BJ (cell line): ENCODE measurements at regions of chr20 and their contacts with region 1.

Region 1: GRCh38 chr20:21571841-21572690 is 58.2 kb upstream of the NKX2-2 start:
- DNase-seq: no peak
- H3K4me3 ChIP-seq: no peak overlapping the region
- H3K27me3 ChIP-seq: no peaks in the 10 kb centered on the region
- CTCF ChIP-seq: peak; percentile 86

Region 2: GRCh38 chr20:20837574-20838021 is 734.5 kb before region 1 on chr20:
- CTCF ChIA-PET with region 1: interaction called, 13 read pairs
- POLR2A ChIA-PET with region 1: no interaction called
- DNase-seq: no peak
- H3K4me3 ChIP-seq: no peak overlapping the region
- H3K27me3 ChIP-seq: no peaks in the 10 kb centered on the region
- CTCF ChIP-seq: peak; percentile 72

Region 3: DNA sequence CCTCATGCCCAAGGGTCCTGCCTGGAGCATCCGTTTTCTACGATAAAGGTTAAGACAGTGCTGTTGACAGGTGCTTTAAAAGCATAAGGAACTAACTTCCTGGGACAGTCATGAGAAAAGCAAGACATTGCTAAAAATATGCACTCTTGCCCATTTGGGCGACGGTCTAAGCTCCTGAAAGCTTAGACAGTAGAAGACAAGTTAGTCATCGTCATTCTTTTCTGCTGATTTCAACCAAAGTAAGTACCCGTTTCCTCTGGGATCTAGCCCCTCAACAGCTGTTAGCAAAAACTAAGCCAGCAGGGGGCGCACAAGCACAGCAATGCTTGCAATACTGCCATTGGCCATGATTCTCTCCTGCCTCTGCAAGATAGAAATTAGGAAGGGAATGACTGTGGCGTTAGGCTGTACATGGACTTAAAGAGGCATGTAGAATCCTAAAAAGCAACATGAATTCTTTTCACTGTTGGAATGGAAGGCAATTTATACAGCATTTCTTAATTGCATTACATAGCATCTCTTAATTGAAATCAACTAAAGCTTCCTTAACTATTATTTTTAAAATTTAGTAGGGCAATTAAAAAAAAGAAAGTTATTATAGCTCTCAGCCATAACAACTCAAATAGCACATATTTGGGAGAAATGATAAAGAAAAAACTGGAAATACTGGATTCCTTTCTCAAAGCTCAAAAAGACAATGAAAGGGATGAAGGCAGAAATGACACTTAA is 711.8 kb before region 1 on chr20:
- CTCF ChIA-PET with region 1: interaction called, 15 read pairs
- POLR2A ChIA-PET with region 1: no interaction called
- DNase-seq: peak; percentile 31
- H3K4me3 ChIP-seq: no peak overlapping the region
- H3K27me3 ChIP-seq: no peaks in the 10 kb centered on the region
- CTCF ChIP-seq: peak; percentile 79

Region 4: DNA sequence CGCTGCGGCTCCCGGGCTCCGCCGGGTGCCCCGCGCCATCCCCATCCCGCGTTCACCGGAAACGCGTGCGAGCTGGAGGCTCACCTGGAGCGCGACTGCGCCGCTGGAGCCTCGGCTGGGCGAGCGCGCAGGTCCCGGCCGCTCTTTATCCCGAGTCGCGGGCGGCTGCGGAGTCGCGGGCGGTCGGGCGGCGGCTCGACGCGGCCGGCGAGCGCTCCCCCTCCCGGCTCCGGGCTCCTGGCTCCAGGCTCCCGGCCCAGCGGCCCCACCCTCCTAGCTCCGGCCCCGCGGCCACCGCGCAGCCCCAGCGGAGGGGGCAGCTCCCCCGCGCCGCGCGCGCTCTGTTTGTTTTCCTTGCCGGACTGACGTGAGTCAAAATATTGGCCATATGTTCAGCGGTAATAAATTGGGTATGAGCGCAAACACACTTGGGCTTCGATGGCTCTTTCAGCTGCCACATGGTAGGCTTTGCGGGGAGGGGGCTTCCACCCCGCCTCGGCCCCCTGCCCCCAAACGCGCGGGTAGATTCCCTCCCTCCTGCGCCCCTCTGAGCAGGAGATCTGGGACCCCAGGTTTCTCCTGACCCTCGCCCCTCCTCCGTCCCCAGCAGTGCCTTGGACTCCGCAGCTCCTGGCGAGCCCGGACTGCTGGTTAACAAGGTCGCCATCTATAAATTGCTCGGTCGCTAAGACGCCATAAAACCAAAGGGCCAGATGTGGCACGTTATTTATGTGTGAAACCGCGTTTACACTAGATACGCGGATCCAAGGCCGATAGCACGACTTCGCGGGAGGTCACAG is 49.4 kb before region 1 on chr20:
- CTCF ChIA-PET with region 1: no interaction called
- POLR2A ChIA-PET with region 1: no interaction called
- DNase-seq: no peak
- H3K4me3 ChIP-seq: no peak overlapping the region
- H3K27me3 ChIP-seq: peaks cover 53% of the 10 kb centered on the region
- CTCF ChIP-seq: no peak

Region 5: GRCh38 chr20:21583486-21584168 is 11.6 kb after region 1 on chr20:
- CTCF ChIA-PET with region 1: interaction called, 12 read pairs
- POLR2A ChIA-PET with region 1: no interaction called
- DNase-seq: no peak
- H3K4me3 ChIP-seq: no peak overlapping the region
- H3K27me3 ChIP-seq: no peaks in the 10 kb centered on the region
- CTCF ChIP-seq: no peak